ENCODE measurements at regions of chr6 and their contacts with region 1.

Region 1: DNA sequence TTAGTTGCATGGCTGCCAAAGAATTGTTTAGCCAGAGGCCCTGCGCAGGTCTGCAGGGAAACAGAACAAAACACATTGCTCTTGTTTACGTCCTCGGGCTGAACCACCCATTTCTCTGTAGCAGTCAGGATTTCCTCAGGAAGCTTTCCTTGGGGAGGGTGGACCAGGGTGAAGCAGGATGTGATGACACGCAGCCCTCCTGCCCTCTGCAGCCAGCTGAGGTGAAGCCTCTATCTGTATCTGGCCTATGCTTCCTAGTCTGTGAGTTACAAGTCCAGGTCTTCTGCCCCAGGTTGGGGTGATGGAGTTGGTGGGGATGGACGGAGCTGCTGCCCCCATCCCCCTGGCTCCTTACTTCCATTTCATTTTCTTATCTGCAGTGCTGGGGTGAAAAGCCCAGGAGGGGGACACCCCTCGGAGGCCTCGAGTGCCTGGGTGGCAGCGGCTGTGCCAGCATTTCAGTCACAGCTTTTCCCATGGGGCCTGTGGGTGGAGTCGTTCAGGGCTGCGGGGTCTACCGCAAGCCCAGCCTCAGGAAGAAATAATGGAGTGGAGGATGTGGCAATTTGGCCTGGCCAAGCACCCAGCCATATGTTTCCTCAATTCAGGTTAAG is 24.9 kb downstream of the SASH1 start:
- DNase-seq: peak; percentile 80
- ATAC-seq: peak; percentile 81

Region 2: GRCh38 chr6:148240461-148240840 is 127.1 kb before region 1 on chr6:
- intact Hi-C with region 1: no loop called
- DNase-seq: peak; percentile 67
- ATAC-seq: peak; percentile 59

Region 3: GRCh38 chr6:148395583-148396101 is 28.1 kb after region 1 on chr6:
- intact Hi-C with region 1: loop called (anchors 5 kb)
- DNase-seq: no peak
- ATAC-seq: peak; percentile 89

Region 4: GRCh38 chr6:148440877-148441453 is 73.4 kb after region 1 on chr6:
- intact Hi-C with region 1: loop called (anchors 5 kb)
- DNase-seq: peak; percentile 77
- ATAC-seq: peak; percentile 87